ENCODE measurements at regions of chr20 and their contacts with region 1.

Region 1: DNA sequence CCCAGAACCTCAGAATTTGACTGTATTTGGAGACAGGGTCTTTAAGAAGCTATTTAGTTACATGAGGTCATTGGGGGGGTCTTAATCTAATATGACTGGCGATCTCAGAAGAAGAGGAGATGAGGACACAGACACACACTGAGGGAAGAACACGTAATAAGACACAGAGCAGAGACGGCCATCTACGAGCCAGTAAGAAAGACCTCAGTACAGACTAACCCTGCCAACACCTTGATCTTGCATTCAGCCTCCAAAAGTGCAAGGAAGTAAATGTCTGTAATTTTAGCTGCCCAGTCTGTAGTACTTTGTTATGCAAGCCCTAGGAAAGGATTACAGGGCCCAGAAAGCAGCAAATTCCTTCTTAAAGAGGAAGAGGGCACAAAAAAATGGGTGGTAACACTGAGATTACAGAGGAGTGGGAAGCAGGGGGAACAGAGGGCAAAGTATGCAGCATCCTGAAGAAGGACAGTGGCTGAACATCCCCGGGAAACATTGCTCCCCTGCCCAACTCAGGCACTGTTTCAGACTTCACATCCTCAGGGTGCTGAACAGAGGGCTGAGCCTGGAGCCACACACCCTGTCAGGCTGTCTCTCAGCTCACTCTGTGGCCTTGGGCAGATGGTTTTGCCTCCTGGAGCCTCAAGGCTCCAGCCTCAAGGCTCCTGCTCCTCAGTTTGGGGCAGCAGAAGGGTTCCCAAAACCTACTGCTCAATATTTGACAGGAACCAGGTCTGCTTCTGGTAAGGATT is 27.9 kb upstream of the SIRPG start:
- DNase-seq: no peak
- H3K4me3 ChIP-seq: no peak overlapping the region
- H3K27ac ChIP-seq: no peak overlapping the region
- H3K4me1 ChIP-seq: peaks cover 15% of the 10 kb centered on the region
- H3K27me3 ChIP-seq: no peaks in the 10 kb centered on the region
- CTCF ChIP-seq: no peak

Region 2: DNA sequence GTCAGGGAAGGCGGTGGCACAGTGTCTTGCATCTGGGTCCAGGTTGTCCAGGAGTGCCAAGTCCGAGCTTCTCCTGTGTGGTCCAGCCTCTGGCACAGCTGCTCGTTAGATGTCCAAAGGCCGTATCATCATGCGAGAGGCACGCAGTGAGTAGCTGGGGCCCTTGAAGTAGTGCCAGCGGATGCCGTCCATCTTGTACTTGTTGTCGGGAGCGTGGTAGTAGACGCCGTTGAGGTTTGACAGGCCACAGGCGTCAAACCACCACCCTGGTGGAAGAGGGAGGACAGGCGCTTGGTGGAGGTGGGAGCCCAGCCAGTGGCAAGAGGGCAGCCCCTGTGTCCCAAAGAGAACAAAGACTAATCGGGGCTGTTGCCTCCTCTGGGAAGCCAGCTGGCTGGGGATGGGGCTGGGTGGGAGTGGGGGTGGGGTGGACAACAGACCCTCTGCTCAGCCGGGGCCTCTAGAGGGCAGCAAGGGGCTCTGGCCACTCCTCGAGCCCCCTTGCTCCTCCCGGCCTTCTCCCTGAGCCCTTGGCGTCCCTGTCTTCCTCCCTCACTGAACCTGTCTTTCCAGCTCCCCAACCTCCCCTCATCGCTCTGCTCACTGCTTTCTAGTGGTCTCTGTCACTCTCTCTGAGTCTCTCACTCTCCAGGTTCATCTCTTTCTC is 812.5 kb before region 1 on chr20:
- CTCF ChIA-PET with region 1: interaction called, 13 read pairs
- POLR2A ChIA-PET with region 1: no interaction called
- intact Hi-C with region 1: no loop called
- DNase-seq: no peak
- H3K4me3 ChIP-seq: no peak overlapping the region
- H3K27ac ChIP-seq: no peak overlapping the region
- H3K4me1 ChIP-seq: 0 out of 2 replicates have a peak, but pooled peaks cover 5% of the 10 kb centered on the region
- H3K27me3 ChIP-seq: no peaks in the 10 kb centered on the region; the same call in 1 of the 2 replicates
- CTCF ChIP-seq: no peak